ENCODE measurements at regions of chr11 and their contacts with region 1.

Region 1: GRCh38 chr11:63738720-63739360 is 29.7 kb downstream of the ZFTA start:
- DNase-seq: peak; percentile 20 to 61
- ATAC-seq: peak; percentile 64 to 74
- H3K4me3 ChIP-seq: no peak overlapping the region
- H3K27ac ChIP-seq: peak overlapping the region in 2 of 4 donors; percentile 3 to 8
- H3K4me1 ChIP-seq: no peaks in the 10 kb centered on the region
- H3K27me3 ChIP-seq: no peaks in the 10 kb centered on the region
- CTCF ChIP-seq: peak; percentile 84 to 97 (median 90)
- POLR2A ChIP-seq: no peak

Region 2: GRCh38 chr11:63478896-63479295 is 259.9 kb before region 1 on chr11:
- in situ Hi-C with region 1: loop called (anchors 5 to 10 kb)
- intact Hi-C with region 1: loop called (anchors 2 kb)
- DNase-seq: peak; percentile 18 to 41
- ATAC-seq: peak; percentile 85 to 90
- H3K4me3 ChIP-seq: no peak overlapping the region
- H3K27ac ChIP-seq: no peak overlapping the region
- H3K4me1 ChIP-seq: no peaks in the 10 kb centered on the region
- H3K27me3 ChIP-seq: no peaks in the 10 kb centered on the region
- CTCF ChIP-seq: peak; percentile 80 to 92 (median 86)
- POLR2A ChIP-seq: no peak

Region 3: DNA sequence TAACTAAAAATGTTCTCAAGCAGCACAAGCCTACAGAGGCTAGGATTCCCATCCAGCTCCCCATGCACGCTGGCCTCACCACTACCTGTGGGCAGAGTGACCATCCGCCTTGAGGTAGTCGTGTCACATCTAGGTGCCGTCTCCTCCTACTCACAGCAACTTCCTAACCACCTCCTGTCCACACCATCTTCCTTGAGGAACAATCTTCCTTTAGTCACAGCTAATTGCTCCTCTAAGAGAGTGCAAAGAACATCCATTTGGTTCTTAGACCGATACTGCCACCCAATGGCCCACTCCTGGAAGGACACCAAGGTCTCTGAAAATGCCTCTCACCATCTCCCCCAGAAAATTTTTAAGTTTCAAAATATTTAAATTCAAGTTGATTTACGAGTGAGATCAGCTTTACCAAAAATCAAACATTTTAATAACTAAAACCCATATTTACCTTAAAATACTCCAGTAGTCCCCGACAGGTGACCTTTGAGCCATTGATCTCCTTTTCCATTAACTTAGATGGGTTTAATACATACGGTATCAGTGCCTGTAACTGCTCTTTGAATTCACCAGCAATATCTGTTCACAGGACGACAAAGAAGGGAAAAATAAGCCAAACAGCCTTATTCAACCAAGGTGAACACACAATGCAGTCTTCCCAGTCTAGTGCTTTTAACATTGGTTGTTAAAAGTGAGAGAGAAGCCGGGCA is 102.9 kb before region 1 on chr11:
- in situ Hi-C with region 1: loop called in 2 of 4 experiments (anchors 10 to 25 kb)
- intact Hi-C with region 1: loop called (anchors 2 kb)
- DNase-seq: peak in 1 of 2 donors; percentile 40
- ATAC-seq: peak; percentile 60 to 66
- H3K4me3 ChIP-seq: no peak overlapping the region
- H3K27ac ChIP-seq: no peak overlapping the region
- H3K4me1 ChIP-seq: no peaks in the 10 kb centered on the region
- H3K27me3 ChIP-seq: no peaks in the 10 kb centered on the region
- CTCF ChIP-seq: peak; percentile 61 to 76 (median 68)
- POLR2A ChIP-seq: no peak

Region 4: DNA sequence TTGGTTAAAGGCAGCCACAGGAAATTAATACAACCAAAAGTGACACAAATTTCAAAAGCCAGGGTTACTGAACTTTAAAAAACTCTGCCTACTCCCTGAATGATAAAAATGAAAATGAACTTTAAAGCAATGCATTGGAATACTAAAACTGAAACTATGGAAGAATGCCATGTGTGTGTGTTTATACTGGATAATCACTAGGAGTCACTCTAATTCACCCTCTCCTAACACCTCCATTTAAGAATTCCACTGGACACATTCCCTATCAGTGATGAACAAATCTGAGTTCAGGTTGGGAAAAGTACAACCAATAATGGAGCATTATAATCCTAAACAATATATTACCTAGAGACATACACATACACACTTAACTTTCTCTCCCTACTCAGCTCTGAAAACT is 97.1 kb before region 1 on chr11:
- in situ Hi-C with region 1: loop called in 2 of 4 experiments (anchors 10 to 25 kb)
- intact Hi-C with region 1: loop called (anchors 2 kb)
- DNase-seq: no peak
- ATAC-seq: no peak
- H3K4me3 ChIP-seq: no peak overlapping the region
- H3K27ac ChIP-seq: no peak overlapping the region
- H3K4me1 ChIP-seq: no peaks in the 10 kb centered on the region
- H3K27me3 ChIP-seq: no peaks in the 10 kb centered on the region
- CTCF ChIP-seq: no peak
- POLR2A ChIP-seq: no peak

Region 5: DNA sequence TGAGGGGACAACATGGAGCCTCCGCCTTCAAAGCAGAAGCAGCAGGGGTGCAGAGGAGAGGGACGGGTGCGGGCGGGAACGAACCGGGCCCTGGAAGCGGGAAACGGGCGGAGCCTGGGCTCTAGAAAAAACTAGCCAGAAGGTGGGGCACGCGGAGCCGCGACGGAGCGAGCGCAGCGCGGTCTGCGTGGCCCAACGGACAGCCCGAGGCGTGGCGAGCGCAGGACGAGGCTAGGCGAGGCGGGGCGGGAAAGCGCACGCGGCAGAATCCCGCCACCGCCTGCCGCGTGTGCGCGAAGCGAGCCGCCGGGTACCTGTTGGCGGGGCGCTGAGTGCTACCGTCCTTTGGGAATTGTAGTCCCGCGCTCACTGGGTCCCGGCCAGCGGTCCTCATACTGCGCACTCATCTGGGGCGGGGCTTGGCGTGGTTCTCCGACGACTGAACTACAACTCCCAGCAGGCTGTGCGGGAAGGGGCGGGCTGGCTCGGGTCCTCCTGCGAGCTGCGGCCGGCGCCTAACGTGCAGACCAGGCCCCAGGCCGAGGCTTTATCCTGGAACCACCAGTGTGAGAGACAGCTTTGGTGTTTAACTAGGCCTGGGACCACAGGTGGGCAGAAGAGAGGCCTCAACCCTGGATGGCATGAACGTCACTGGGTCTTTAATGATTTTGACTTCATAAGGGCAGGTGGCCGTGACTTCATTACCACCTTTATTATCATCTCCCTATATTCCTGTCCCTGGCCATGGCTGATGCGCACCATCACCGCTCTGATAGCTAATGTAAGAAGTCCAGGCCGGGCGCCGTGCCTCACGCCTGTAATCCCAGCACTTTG is 67.3 kb before region 1 on chr11 and contains the start of gene ATL3:
- in situ Hi-C with region 1: loop called in 3 of 4 experiments (anchors 10 kb)
- intact Hi-C with region 1: loop called (anchors 1 kb)
- DNase-seq: peak; percentile 97 to 98
- ATAC-seq: peak; percentile 88 to 91
- H3K4me3 ChIP-seq: peak within 1 kb of the TSS; percentile 78 to 92 (median 85)
- H3K27ac ChIP-seq: peak within 1 kb of the TSS; percentile 96 to 98 (median 97)
- H3K4me1 ChIP-seq: peaks cover 46 to 48% of the 10 kb centered on the region in 2 donors
- H3K27me3 ChIP-seq: no peaks in the 10 kb centered on the region
- CTCF ChIP-seq: peak in 2 of 5 experiments; percentile 12 to 23
- POLR2A ChIP-seq: peak; percentile 75
- total RNA-seq, gene ATL3: 10.2 to 16.5 (median 12.4) TPM

Region 6: GRCh38 chr11:63698976-63699733 is 39.7 kb before region 1 on chr11:
- in situ Hi-C with region 1: no loop called
- intact Hi-C with region 1: no loop called
- DNase-seq: no peak
- ATAC-seq: no peak
- H3K4me3 ChIP-seq: no peak overlapping the region
- H3K27ac ChIP-seq: no peak overlapping the region
- H3K4me1 ChIP-seq: peaks cover 6 to 24% of the 10 kb centered on the region in 2 donors
- H3K27me3 ChIP-seq: no peaks in the 10 kb centered on the region
- CTCF ChIP-seq: no peak
- POLR2A ChIP-seq: no peak

Measured in gastrocnemius medialis (tissue), 4 donors.